CD4-positive, alpha-beta memory T cell (primary cell): ENCODE measurements at regions of chr11 and their contacts with region 1.

Region 1: GRCh38 chr11:85854557-85855340 is 434 bp upstream of the CCDC83 start:
- DNase-seq: peak; percentile 84 to 93 (median 88)
- H3K4me3 ChIP-seq: peak overlapping the region; percentile 81 to 95
- H3K4me3 Mint-ChIP-seq: peak overlapping the region; percentile 86 to 94 (median 91)
- H3K27ac ChIP-seq: peak overlapping the region; percentile 73
- H3K27ac Mint-ChIP-seq: peak overlapping the region; percentile 91 to 96 (median 94)
- H3K4me1 ChIP-seq: peaks cover 16% of the 10 kb centered on the region
- H3K4me1 Mint-ChIP-seq: peaks cover 6 to 16% (median 11%) of the 10 kb centered on the region in 4 donors
- H3K27me3 ChIP-seq: no peaks in the 10 kb centered on the region
- H3K27me3 Mint-ChIP-seq: peaks cover 0 to 2% of the 10 kb centered on the region in 2 donors

Region 2: GRCh38 chr11:85595285-85595884 is 259.4 kb before region 1 on chr11:
- CTCF ChIA-PET with region 1: interaction called, 8 read pairs
- POLR2A ChIA-PET with region 1: no interaction called
- intact Hi-C with region 1: loop called (anchors 1 kb)
- DNase-seq: peak in 4 of 5 donors; percentile 41 to 63 (median 54)
- H3K4me3 ChIP-seq: no peak overlapping the region
- H3K4me3 Mint-ChIP-seq: no peak overlapping the region
- H3K27ac ChIP-seq: no peak overlapping the region
- H3K27ac Mint-ChIP-seq: no peak overlapping the region
- H3K4me1 ChIP-seq: no peaks in the 10 kb centered on the region
- H3K4me1 Mint-ChIP-seq: no peaks in the 10 kb centered on the region
- H3K27me3 ChIP-seq: no peaks in the 10 kb centered on the region
- H3K27me3 Mint-ChIP-seq: peaks cover 0 to 3% of the 10 kb centered on the region in 2 donors

Region 3: GRCh38 chr11:85699957-85700741 is 154.6 kb before region 1 on chr11:
- CTCF ChIA-PET with region 1: interaction called, 29 read pairs
- POLR2A ChIA-PET with region 1: interaction called, 5 read pairs
- intact Hi-C with region 1: no loop called
- DNase-seq: peak in 4 of 5 donors; percentile 32 to 53 (median 40)
- H3K4me3 ChIP-seq: peak overlapping the region in 1 of 2 donors; percentile 7
- H3K4me3 Mint-ChIP-seq: peak overlapping the region in 7 of 8 donors; percentile 32 to 72 (median 61)
- H3K27ac ChIP-seq: no peak overlapping the region
- H3K27ac Mint-ChIP-seq: peak overlapping the region; percentile 40 to 87 (median 68)
- H3K4me1 ChIP-seq: peaks cover 25% of the 10 kb centered on the region
- H3K4me1 Mint-ChIP-seq: peaks cover 21 to 32% (median 23%) of the 10 kb centered on the region in 4 donors
- H3K27me3 ChIP-seq: no peaks in the 10 kb centered on the region
- H3K27me3 Mint-ChIP-seq: no peaks in the 10 kb centered on the region

Region 4: DNA sequence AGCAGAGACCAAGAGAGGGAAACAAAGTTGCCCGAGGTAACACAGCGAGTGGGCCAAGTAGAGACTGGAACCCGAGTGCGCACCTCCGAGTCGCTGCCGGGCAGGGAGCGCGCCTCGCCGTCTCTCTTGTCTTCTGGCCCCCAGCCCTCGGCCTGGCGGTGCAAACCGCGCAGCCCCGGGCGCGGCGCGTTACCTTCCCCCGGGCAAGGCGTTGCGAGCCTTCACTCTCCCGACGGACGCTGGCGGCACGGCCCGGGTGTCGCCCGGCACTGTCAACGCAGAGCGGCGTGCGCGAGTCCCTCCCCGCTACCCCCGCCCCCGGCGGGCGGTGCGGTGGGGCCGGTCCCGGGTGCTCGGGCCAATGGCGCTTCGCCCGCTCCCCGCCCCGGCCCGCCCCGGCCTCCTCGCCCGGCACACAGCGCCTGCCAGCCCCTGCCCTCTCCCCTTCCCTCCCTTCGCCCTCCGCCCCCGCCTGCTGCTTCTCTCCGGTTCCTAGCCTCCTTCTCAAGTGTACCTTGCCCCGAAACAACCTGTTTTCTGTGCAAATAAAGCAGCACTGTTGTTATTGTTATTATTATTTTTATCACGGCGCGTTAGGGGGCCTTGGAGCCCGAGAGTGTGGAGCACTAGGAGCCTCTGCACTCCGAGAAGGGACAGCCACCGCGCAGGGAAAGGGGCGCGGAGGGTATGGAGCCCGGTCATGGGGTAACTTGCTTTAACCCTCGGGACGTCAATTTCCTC is 43.7 kb before region 1 on chr11 and contains the start of gene SYTL2:
- CTCF ChIA-PET with region 1: interaction called, 15 read pairs
- POLR2A ChIA-PET with region 1: interaction called, 5 read pairs
- intact Hi-C with region 1: loop called (anchors 1 kb)
- DNase-seq: peak; percentile 74 to 83 (median 78)
- H3K4me3 ChIP-seq: peak within 1 kb of the TSS; percentile 58 to 85
- H3K4me3 Mint-ChIP-seq: peak within 1 kb of the TSS; percentile 89 to 97 (median 94)
- H3K27ac ChIP-seq: peak within 1 kb of the TSS; percentile 59
- H3K27ac Mint-ChIP-seq: peak within 1 kb of the TSS; percentile 90 to 96 (median 94)
- H3K4me1 ChIP-seq: peaks cover 38% of the 10 kb centered on the region
- H3K4me1 Mint-ChIP-seq: peaks cover 21 to 69% (median 45%) of the 10 kb centered on the region in 4 donors
- H3K27me3 ChIP-seq: no peaks in the 10 kb centered on the region
- H3K27me3 Mint-ChIP-seq: peaks cover 0 to 3% of the 10 kb centered on the region in 2 donors
- total RNA-seq, gene SYTL2: 35.5 to 35.7 TPM

Region 5: DNA sequence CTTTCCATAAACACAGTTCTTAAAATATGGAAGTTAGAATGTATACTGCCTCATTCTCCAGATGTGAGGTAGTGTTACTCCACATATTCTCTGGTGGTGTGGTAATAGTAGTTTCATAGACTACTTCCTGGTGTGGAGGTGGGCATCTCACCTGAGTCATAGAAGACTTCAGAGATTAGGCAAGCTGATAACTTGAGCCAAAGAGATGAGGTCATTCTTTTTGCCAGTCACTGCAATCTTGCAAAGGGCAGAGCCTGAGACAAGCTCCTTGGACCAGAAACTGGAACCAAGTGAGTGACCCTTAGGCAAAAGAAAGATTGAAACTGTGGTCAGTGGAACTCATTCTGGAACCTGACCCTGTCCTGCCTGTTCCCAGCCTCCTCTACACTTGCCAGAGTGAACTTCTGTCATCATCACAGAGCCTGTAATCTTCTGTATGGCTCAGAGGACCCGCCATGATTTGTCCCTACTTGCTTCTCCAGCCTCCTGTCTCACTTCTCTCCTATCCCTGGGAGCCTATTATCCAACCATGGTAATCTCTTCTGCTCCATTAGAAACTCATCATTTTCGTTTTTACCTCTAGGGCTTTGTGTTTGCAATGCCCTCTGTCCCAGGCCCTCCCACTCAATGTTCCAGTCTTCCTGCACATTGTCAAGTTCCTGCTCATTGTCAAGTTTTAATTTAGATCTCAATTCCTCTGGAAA is 10.2 kb before region 1 on chr11:
- CTCF ChIA-PET with region 1: interaction called, 10 read pairs
- POLR2A ChIA-PET with region 1: interaction called, 5 read pairs
- intact Hi-C with region 1: no loop called
- DNase-seq: no peak
- H3K4me3 ChIP-seq: no peak overlapping the region
- H3K4me3 Mint-ChIP-seq: no peak overlapping the region
- H3K27ac ChIP-seq: no peak overlapping the region
- H3K27ac Mint-ChIP-seq: peak overlapping the region in 2 of 7 donors; percentile 13 to 17
- H3K4me1 ChIP-seq: no peaks in the 10 kb centered on the region
- H3K4me1 Mint-ChIP-seq: peaks cover 0 to 4% (median 2%) of the 10 kb centered on the region in 4 donors
- H3K27me3 ChIP-seq: no peaks in the 10 kb centered on the region
- H3K27me3 Mint-ChIP-seq: peaks cover 0 to 1% of the 10 kb centered on the region in 2 donors

Region 6: GRCh38 chr11:86218125-86219084 is 363.7 kb after region 1 on chr11:
- CTCF ChIA-PET with region 1: interaction called, 11 read pairs
- POLR2A ChIA-PET with region 1: no interaction called
- intact Hi-C with region 1: loop called (anchors 1 kb)
- DNase-seq: peak; percentile 51 to 63 (median 55)
- H3K4me3 ChIP-seq: peak overlapping the region in 1 of 2 donors; percentile 3
- H3K4me3 Mint-ChIP-seq: peak overlapping the region; percentile 65 to 89 (median 75)
- H3K27ac ChIP-seq: no peak overlapping the region
- H3K27ac Mint-ChIP-seq: peak overlapping the region in 3 of 7 donors; percentile 24 to 72 (median 31)
- H3K4me1 ChIP-seq: peaks cover 4% of the 10 kb centered on the region
- H3K4me1 Mint-ChIP-seq: peaks cover 10 to 18% (median 11%) of the 10 kb centered on the region in 4 donors
- H3K27me3 ChIP-seq: no peaks in the 10 kb centered on the region
- H3K27me3 Mint-ChIP-seq: peaks cover 7 to 9% of the 10 kb centered on the region in 2 donors

Region 7: GRCh38 chr11:86456052-86456939 is 601.5 kb after region 1 on chr11:
- CTCF ChIA-PET with region 1: interaction called, 3 read pairs
- POLR2A ChIA-PET with region 1: no interaction called
- intact Hi-C with region 1: loop called (anchors 5 kb)
- DNase-seq: peak; percentile 40 to 58 (median 51)
- H3K4me3 ChIP-seq: no peak overlapping the region
- H3K4me3 Mint-ChIP-seq: peak overlapping the region in 1 of 8 donors; percentile 53
- H3K27ac ChIP-seq: no peak overlapping the region
- H3K27ac Mint-ChIP-seq: peak overlapping the region in 1 of 7 donors; percentile 58
- H3K4me1 ChIP-seq: no peaks in the 10 kb centered on the region
- H3K4me1 Mint-ChIP-seq: peaks cover 1 to 7% (median 6%) of the 10 kb centered on the region in 4 donors
- H3K27me3 ChIP-seq: no peaks in the 10 kb centered on the region
- H3K27me3 Mint-ChIP-seq: no peaks in the 10 kb centered on the region